ENCODE measurements at regions of chr6 and their contacts with region 1.

Region 1: DNA sequence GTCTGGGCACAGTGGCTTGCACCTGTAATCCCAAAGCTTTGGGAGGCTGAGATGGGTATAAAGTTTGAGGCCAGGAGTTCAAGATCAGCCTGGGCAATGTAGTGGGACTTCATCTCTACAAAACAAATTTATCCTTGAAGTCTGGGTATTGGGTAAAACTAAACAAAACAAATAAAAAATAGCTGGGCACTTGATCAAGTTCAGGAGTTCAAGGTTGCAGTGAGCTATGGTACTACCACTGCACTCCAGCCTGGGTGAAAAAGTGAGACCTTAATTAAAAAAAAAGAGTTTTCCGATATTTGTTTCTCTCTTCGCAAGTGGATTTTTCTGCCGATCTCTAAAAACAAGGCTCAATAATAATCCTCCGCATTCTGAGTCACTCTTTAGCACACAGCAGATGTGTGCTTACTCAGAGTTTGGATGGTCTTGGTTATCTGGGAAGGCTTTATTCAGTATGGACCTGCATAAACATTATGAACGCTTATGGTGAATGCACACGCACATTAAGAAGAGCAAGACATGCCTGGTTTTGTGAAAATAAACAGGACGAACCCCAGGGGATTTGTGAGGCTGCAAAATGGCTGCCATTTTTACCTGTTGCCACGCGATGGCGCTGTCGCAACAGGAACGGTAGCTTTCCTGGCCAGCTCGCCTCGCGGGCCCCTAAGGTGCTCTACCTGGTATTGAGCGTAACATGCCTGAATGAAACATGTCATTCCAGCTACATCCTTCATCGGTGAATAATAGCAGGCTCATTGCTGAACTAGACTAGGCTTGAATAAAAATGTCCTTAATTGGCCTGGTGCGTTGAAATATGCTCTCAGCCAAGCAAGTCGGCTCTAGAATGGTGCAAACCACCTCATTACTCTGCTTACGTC is 6.0 kb downstream of the OPN5 start:
- DNase-seq: no peak
- H3K4me3 ChIP-seq: no peak overlapping the region
- H3K27ac ChIP-seq: no peak overlapping the region
- H3K4me1 ChIP-seq: no peaks in the 10 kb centered on the region
- H3K27me3 ChIP-seq: no peaks in the 10 kb centered on the region
- CTCF ChIP-seq: peak; percentile 32 to 79 (median 74)

Region 2: GRCh38 chr6:47810885-47811284 is 23.0 kb after region 1 on chr6:
- intact Hi-C with region 1: no loop called
- DNase-seq: no peak
- H3K4me3 ChIP-seq: no peak overlapping the region
- H3K27ac ChIP-seq: no peak overlapping the region
- H3K4me1 ChIP-seq: no peaks in the 10 kb centered on the region
- H3K27me3 ChIP-seq: no peaks in the 10 kb centered on the region
- CTCF ChIP-seq: no peak

Region 3: DNA sequence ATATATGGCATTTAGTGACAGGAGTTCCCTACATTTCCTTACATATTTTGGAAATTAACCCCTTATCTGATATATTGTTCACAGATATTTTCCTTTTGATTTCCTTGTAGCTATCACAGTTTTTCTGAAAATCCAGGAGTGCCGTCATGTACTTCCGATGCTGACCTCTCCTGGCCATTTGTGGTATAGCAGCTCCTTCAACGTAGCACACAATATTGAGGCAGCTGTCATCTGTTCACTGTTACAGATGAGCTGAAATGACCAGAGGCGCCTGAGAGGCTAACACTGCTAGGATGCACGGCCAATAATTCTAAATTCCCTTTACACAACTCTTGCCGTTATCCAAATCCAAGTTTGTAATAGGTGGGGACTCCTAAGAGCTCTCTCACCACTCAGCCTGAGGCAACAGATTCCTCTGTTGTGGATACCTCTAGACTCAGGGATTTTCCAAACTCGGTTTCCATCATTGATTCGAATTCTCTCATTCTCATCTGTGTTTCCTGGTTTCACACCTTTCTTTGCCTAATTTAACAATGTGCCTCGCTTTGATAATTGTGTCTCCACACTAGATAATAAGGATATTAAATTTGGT is 1622.2 kb after region 1 on chr6:
- intact Hi-C with region 1: loop called (anchors 5 kb)
- DNase-seq: peak in 1 of 2 donors; percentile 78
- H3K4me3 ChIP-seq: no peak overlapping the region
- H3K27ac ChIP-seq: no peak overlapping the region
- H3K4me1 ChIP-seq: no peaks in the 10 kb centered on the region
- H3K27me3 ChIP-seq: no peaks in the 10 kb centered on the region
- CTCF ChIP-seq: peak; percentile 44 to 84 (median 79)